PC-9 (cell line): ENCODE measurements at regions of chr9 and their contacts with region 1.

Region 1: DNA sequence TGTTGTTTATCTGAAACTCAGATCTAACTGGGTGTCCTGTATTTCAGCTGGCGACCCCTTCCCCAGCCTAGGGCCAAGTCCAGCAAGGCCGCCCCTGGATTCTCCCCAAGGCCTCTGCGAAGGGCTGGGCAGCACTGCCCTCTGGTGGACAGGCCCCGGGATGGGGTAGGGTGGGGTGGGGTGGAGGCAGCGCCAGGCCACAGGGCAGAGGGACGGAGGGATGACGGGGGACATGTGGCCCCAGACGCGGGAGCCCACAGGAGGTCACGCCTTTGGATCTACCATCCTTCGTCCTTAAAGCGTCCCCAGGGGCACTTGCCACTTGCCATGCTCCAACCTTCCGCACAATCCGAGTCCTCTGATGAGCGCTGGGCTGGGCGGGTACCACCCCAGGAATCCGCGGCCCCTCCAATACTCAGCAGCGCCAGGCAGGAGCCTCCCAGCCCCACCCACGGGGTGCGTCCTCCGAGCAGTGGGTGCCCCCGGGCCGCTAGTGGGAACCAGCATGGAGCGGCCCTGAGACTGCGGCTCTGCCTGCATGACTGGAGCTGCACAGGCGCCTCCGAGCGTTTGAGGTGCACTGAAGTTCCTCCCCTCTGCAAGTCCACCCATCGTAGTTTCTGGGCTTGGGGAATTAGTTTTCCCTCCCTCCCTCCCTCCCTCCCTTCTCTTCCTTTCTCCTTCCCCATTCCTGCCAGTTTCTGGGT is 7.1 kb upstream of the AGPAT2 start:
- DNase-seq: peak in 1 of 2 experiments; percentile 82
- H3K4me3 ChIP-seq: peak overlapping the region; percentile 43; the same call in 1 of the 2 replicates
- H3K27ac ChIP-seq: peak overlapping the region; percentile 94
- H3K4me1 ChIP-seq: peaks cover 47% of the 10 kb centered on the region
- H3K27me3 ChIP-seq: no peaks in the 10 kb centered on the region
- CTCF ChIP-seq: peak; percentile 91

Region 2: DNA sequence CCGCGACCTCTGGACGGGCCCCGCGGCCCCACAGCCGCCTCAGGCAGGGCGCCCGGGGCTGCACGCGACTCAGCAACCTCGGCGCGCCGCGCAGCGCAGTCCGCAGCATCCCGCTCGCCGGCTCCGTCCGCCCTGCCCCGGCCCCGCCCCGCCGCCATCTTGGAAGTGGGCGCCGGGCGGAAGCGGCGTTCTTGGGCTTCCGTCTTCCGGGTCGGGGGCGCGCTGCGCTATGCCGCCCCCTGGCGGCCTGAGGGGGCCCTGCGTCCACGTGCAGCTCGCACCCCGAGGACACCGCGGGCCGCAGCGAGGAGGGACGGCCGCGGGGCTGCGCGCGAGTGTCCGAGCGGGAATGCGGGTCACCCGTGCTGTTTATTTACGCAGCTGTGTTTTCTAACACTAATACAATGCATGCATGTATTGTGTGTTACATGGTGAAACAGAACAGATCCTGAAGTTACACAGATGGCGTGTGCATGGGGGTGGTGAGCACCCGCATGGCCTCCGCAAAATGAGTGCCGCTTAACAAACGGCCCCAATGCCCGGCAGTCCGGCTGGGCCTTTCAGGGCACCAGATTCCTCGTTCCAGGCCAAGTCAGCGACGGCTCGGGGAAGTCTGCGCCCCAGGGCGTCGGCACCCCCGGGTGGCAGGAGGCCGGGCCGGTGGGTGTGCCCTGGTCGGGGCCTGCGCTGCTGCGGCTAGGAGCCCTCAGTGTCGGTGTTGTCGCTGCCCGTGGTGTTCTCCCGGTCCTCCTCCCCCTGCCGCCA is 330.6 kb before region 1 on chr9 and contains the start of gene DNLZ:
- CTCF ChIA-PET with region 1: no interaction called
- POLR2A ChIA-PET with region 1: interaction called, 12 read pairs
- intact Hi-C with region 1: no loop called
- DNase-seq: peak; percentile 52 to 89
- H3K4me3 ChIP-seq: peak within 1 kb of the TSS; percentile 77
- H3K27ac ChIP-seq: peak within 1 kb of the TSS; percentile 65
- H3K4me1 ChIP-seq: peaks cover 12% of the 10 kb centered on the region
- H3K27me3 ChIP-seq: no peaks in the 10 kb centered on the region
- CTCF ChIP-seq: peak; percentile 90
- total RNA-seq, gene DNLZ: 9.1 and 19.1 TPM in 2 replicates

Region 3: DNA sequence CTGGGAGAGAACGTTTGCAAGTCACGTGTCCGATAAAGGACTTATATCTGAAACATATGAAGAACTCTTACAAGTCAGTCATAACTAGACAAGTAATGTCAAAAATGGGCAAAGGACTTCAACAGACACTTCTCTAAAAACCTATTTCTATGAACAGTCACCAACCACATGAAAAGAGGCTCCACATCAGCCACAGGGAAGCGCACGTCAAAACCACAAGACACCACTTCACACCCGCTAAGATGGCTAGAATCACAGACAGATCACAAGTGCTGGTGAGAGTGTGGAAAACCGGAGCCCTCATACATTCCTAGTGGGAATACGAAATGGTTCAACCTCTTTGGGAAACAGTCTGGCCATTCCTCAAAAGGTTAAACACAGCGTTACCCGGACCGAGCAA is 309.4 kb before region 1 on chr9:
- CTCF ChIA-PET with region 1: no interaction called
- POLR2A ChIA-PET with region 1: no interaction called
- intact Hi-C with region 1: no loop called
- DNase-seq: no peak
- H3K4me3 ChIP-seq: no peak overlapping the region
- H3K27ac ChIP-seq: no peak overlapping the region
- H3K4me1 ChIP-seq: no peaks in the 10 kb centered on the region
- H3K27me3 ChIP-seq: no peaks in the 10 kb centered on the region
- CTCF ChIP-seq: no peak

Region 4: GRCh38 chr9:136644598-136645351 is 49.6 kb before region 1 on chr9:
- CTCF ChIA-PET with region 1: no interaction called
- POLR2A ChIA-PET with region 1: no interaction called
- intact Hi-C with region 1: loop called (anchors 2 kb)
- DNase-seq: peak; percentile 65 to 86
- H3K4me3 ChIP-seq: peak overlapping the region; percentile 44; the same call in 1 of the 2 replicates
- H3K27ac ChIP-seq: no peak overlapping the region
- H3K4me1 ChIP-seq: peaks cover 16% of the 10 kb centered on the region
- H3K27me3 ChIP-seq: no peaks in the 10 kb centered on the region
- CTCF ChIP-seq: peak; percentile 95

Region 5: DNA sequence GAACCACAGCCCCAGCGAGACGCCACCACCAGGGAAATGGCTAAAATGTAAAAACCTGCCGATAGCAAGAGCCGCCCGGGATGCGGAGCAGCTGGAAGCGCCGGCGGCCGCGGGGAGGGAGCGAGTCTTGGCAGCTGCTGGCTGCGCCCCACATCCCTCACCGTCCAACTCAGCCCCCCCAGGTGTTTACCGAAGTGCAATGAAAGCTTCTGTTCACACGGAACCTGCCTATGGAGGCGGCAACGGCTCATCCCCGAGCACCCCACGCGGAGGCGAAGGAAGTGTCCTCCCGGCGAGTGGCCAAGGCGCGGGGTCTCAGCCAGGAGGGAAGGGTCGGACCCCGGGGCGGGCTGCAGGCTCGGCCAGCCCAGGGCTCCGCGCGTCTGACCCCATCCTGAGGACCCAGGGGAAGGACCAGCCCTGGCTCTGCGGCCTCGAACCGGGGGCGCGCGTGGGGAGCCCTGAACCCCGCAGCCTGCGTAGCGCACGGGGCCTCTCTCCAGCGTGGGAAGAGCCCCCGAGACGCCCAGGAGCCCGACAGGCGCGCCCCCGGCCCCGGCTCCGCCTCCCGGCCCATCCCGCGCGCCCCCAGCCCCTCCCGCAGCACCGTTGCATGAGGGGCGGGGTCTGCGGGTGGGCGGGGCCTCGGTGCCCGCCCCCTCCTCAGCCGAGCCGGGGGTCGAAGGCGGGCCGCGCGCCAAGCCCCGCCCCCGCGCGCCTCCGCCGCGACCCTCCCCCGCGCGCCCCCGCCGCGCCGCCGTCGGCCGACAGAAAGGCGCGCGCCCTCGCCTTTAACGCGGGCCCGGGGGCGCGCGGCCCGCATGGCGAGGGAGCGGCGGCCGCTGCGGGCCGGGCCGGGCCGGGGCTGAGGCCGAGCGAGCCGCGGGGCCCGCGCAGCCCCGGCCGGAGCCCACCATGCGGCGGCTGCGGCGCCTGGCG is 17.6 kb after region 1 on chr9 and contains the start of gene DIPK1B:
- CTCF ChIA-PET with region 1: interaction called, 6 read pairs
- POLR2A ChIA-PET with region 1: interaction called, 3 read pairs
- intact Hi-C with region 1: loop called (anchors 2 kb)
- DNase-seq: no peak
- H3K4me3 ChIP-seq: peak within 1 kb of the TSS; percentile 68
- H3K27ac ChIP-seq: no peak within 1 kb of the TSS
- H3K4me1 ChIP-seq: peaks cover 10% of the 10 kb centered on the region
- H3K27me3 ChIP-seq: no peaks in the 10 kb centered on the region
- CTCF ChIP-seq: no peak
- total RNA-seq, gene DIPK1B: 19.0 and 32.6 TPM in 2 replicates

Region 6: DNA sequence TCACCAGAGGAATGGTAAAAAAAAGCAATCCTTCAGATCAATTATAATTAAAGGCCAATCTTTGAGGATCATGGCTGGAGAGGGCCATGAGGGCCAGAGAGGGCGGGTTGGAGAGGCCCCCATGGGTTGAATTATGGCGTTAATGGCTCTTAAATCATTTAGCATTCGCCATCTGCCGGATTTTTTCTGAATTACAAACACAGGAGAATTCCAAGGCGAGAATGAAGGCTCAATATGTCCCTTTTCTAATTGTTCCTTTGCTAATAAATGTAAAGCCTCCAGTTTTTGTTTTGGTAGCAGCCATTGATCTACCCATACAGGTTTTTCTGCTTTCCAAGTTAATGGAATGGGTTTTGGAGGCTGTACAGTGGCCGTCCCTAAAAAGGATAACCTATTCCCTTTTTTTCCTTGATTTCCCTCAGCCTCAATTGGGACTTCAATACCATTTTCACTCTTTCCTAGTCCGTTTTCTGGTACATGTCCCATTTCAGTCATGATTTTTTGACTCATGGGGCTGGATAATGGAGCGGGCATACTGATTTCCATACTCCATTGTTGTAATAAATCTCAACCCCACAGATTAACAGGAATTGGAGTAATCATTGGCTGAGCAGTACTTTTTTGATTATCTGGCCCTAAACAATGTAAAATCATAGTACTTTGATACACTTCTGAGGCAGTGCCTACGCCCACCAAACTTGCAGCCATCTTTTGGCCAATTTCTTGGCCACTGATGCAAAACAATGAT is 90.0 kb after region 1 on chr9:
- CTCF ChIA-PET with region 1: no interaction called
- POLR2A ChIA-PET with region 1: no interaction called
- intact Hi-C with region 1: no loop called
- DNase-seq: no peak
- H3K4me3 ChIP-seq: no peak overlapping the region
- H3K27ac ChIP-seq: no peak overlapping the region
- H3K4me1 ChIP-seq: no peaks in the 10 kb centered on the region
- H3K27me3 ChIP-seq: peaks cover 17% of the 10 kb centered on the region
- CTCF ChIP-seq: peak; percentile 74; the same call in 1 of the 2 replicates